ENCODE measurements at regions of chr13 and their contacts with region 1.

Region 1: DNA sequence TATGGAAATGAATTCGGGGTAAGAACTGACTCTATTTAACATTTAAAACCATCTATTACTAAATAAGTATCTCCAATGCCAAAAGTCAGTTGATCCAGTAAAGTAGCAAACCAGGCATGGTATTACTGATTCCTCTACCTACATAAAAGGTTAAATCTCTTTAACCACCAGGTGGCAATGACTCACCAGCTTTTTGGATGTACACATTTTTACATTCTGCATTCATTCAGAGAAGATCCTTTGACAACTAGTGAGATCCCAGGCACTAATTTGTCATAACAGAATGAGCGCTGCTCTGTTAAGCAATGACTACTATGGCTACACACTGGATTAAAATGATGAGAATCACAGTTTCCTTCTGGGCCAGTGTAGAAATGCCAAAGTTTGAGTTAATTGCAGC is 329.8 kb upstream of the GPC6 start:
- DNase-seq: peak; percentile 63
- ATAC-seq: peak; percentile 71
- H3K4me3 ChIP-seq: no peak overlapping the region
- H3K27ac ChIP-seq: no peak overlapping the region
- H3K4me1 ChIP-seq: no peaks in the 10 kb centered on the region
- H3K27me3 ChIP-seq: no peaks in the 10 kb centered on the region
- CTCF ChIP-seq: peak; percentile 52

Region 2: GRCh38 chr13:92488249-92488852 is 408.5 kb before region 1 on chr13:
- CTCF ChIA-PET with region 1: no interaction called
- POLR2A ChIA-PET with region 1: no interaction called
- intact Hi-C with region 1: no loop called
- DNase-seq: no peak
- ATAC-seq: no peak
- H3K4me3 ChIP-seq: no peak overlapping the region
- H3K27ac ChIP-seq: no peak overlapping the region
- H3K4me1 ChIP-seq: no peaks in the 10 kb centered on the region
- H3K27me3 ChIP-seq: no peaks in the 10 kb centered on the region
- CTCF ChIP-seq: no peak

Region 3: GRCh38 chr13:93227878-93228642 is 331.2 kb after region 1 on chr13:
- CTCF ChIA-PET with region 1: no interaction called
- POLR2A ChIA-PET with region 1: no interaction called
- intact Hi-C with region 1: loop called (anchors 10 kb)
- DNase-seq: peak; percentile 64
- ATAC-seq: peak; percentile 65
- H3K4me3 ChIP-seq: peak overlapping the region; percentile 88
- H3K27ac ChIP-seq: no peak overlapping the region
- H3K4me1 ChIP-seq: peaks cover 43% of the 10 kb centered on the region
- H3K27me3 ChIP-seq: no peaks in the 10 kb centered on the region
- CTCF ChIP-seq: peak; percentile 37; the same call in 1 of the 2 replicates

Region 4: GRCh38 chr13:93951153-93951552 is 1054.3 kb after region 1 on chr13:
- CTCF ChIA-PET with region 1: no interaction called
- POLR2A ChIA-PET with region 1: no interaction called
- intact Hi-C with region 1: loop called (anchors 10 kb)
- DNase-seq: peak; percentile 7
- ATAC-seq: peak; percentile 56
- H3K4me3 ChIP-seq: no peak overlapping the region
- H3K27ac ChIP-seq: no peak overlapping the region
- H3K4me1 ChIP-seq: no peaks in the 10 kb centered on the region
- H3K27me3 ChIP-seq: no peaks in the 10 kb centered on the region
- CTCF ChIP-seq: peak; percentile 47; the same call in 1 of the 2 replicates

Region 5: GRCh38 chr13:94192431-94192975 is 1295.7 kb after region 1 on chr13:
- CTCF ChIA-PET with region 1: no interaction called
- POLR2A ChIA-PET with region 1: no interaction called
- intact Hi-C with region 1: loop called (anchors 10 kb)
- DNase-seq: peak; percentile 53
- ATAC-seq: peak; percentile 59
- H3K4me3 ChIP-seq: no peak overlapping the region
- H3K27ac ChIP-seq: no peak overlapping the region
- H3K4me1 ChIP-seq: no peaks in the 10 kb centered on the region
- H3K27me3 ChIP-seq: no peaks in the 10 kb centered on the region
- CTCF ChIP-seq: peak; percentile 69